ENCODE measurements at regions of chr7 and their contacts with region 1.

Region 1: GRCh38 chr7:121872831-121873288 is at the start of gene PTPRZ1:
- DNase-seq: peak; percentile 16
- H3K4me3 Mint-ChIP-seq: peak within 1 kb of the TSS; percentile 86
- H3K27ac Mint-ChIP-seq: peak within 1 kb of the TSS; percentile 74
- H3K4me1 Mint-ChIP-seq: no peaks in the 10 kb centered on the region
- H3K27me3 Mint-ChIP-seq: no peaks in the 10 kb centered on the region
- CTCF ChIP-seq: no peak
- total RNA-seq, gene PTPRZ1: 9.8 and 11.1 TPM in 2 replicates

Region 2: DNA sequence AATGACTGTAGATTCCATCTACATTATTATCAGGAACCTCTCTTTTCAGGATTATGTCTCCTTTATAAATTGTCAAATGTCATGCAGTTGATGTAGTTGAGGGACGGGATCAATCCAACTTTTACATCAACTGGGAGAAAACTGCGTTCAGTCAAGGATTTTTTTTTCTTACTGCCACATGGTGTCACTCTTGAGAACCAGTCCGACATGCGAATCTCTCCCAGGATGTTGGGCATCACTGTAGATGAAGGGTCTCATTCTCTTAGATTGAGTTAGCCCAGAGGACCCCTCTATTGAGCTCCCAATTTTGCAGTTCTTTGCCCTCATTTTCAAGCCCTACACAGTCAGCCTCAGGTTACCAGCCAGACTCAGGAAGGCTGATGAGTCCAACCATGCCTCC is 120.2 kb before region 1 on chr7:
- CTCF ChIA-PET with region 1: interaction called, 6 read pairs
- POLR2A ChIA-PET with region 1: interaction called, 5 read pairs
- intact Hi-C with region 1: loop called (anchors 5 kb)
- DNase-seq: peak; percentile 43
- H3K4me3 Mint-ChIP-seq: no peak overlapping the region
- H3K27ac Mint-ChIP-seq: no peak overlapping the region
- H3K4me1 Mint-ChIP-seq: no peaks in the 10 kb centered on the region
- H3K27me3 Mint-ChIP-seq: no peaks in the 10 kb centered on the region
- CTCF ChIP-seq: peak; percentile 39

Region 3: GRCh38 chr7:121810831-121811672 is 61.8 kb before region 1 on chr7:
- CTCF ChIA-PET with region 1: no interaction called
- POLR2A ChIA-PET with region 1: no interaction called
- intact Hi-C with region 1: no loop called
- DNase-seq: no peak
- H3K4me3 Mint-ChIP-seq: no peak overlapping the region
- H3K27ac Mint-ChIP-seq: no peak overlapping the region
- H3K4me1 Mint-ChIP-seq: no peaks in the 10 kb centered on the region
- H3K27me3 Mint-ChIP-seq: no peaks in the 10 kb centered on the region
- CTCF ChIP-seq: no peak

Region 4: GRCh38 chr7:121824276-121824675 is 48.6 kb before region 1 on chr7:
- CTCF ChIA-PET with region 1: no interaction called
- POLR2A ChIA-PET with region 1: no interaction called
- intact Hi-C with region 1: no loop called
- DNase-seq: no peak
- H3K4me3 Mint-ChIP-seq: no peak overlapping the region
- H3K27ac Mint-ChIP-seq: no peak overlapping the region
- H3K4me1 Mint-ChIP-seq: no peaks in the 10 kb centered on the region
- H3K27me3 Mint-ChIP-seq: no peaks in the 10 kb centered on the region
- CTCF ChIP-seq: no peak

Region 5: GRCh38 chr7:121945066-121945848 is 72.4 kb after region 1 on chr7:
- CTCF ChIA-PET with region 1: interaction called, 6 read pairs
- POLR2A ChIA-PET with region 1: no interaction called
- intact Hi-C with region 1: loop called (anchors 5 kb)
- DNase-seq: peak; percentile 60
- H3K4me3 Mint-ChIP-seq: peak overlapping the region; percentile 63
- H3K27ac Mint-ChIP-seq: peak overlapping the region; percentile 69
- H3K4me1 Mint-ChIP-seq: peaks cover 22% of the 10 kb centered on the region
- H3K27me3 Mint-ChIP-seq: no peaks in the 10 kb centered on the region
- CTCF ChIP-seq: no peak